Aorta (tissue), 5 donors: ENCODE measurements at regions of chr14 and their contacts with region 1.

Region 1: DNA sequence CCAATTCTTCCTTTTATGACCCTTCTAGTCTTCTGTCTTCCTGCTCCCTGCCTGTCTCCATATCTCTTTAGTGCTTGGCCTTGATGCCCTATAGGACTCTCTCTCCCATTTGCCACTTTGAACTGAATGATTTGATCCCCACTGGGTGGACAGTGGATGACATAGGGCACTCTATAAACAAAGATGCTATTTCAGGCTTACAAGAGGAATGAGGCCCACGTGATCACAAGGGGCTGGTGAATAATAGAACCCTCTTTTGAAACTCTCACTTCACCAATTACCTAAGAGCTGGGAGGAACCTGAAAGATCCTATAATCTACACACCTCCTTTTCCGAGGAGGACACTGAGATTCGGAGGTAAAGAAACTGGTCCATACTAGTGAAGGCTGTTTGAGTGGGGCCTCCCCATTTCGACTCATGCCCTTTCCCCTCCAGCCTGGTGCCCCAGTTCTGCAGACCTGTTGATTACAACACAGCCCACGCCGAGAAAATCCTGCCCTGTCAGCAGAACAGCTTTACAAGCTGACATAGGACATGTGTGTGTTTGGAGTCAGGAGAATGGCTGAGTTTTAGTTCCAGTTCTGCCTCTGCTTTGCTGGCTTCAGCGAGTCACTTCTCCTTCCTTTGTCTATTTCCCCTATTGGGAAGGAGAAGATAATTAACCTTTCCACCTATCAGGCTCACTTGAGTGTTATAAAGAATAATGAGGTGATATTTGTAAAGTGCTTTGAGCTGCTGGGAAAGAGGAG is 400.3 kb downstream of the ZFP36L1 start:
- DNase-seq: peak in 1 of 2 donors; percentile 87
- ATAC-seq: peak; percentile 37
- H3K4me3 ChIP-seq: no peak overlapping the region
- H3K27ac ChIP-seq: peak overlapping the region; percentile 85 to 94
- H3K4me1 ChIP-seq: peaks cover 7 to 10% of the 10 kb centered on the region in 2 donors
- H3K27me3 ChIP-seq: no peaks in the 10 kb centered on the region

Region 2: GRCh38 chr14:68248481-68249255 is 143.9 kb before region 1 on chr14:
- intact Hi-C with region 1: loop called in 1 of 2 experiments (anchors 5 kb)
- DNase-seq: peak; percentile 57 to 73
- ATAC-seq: peak; percentile 82
- H3K4me3 ChIP-seq: no peak overlapping the region
- H3K27ac ChIP-seq: peak overlapping the region in 1 of 2 donors; percentile 82
- H3K4me1 ChIP-seq: peaks cover 19 to 21% of the 10 kb centered on the region in 2 donors
- H3K27me3 ChIP-seq: no peaks in the 10 kb centered on the region

Region 3: DNA sequence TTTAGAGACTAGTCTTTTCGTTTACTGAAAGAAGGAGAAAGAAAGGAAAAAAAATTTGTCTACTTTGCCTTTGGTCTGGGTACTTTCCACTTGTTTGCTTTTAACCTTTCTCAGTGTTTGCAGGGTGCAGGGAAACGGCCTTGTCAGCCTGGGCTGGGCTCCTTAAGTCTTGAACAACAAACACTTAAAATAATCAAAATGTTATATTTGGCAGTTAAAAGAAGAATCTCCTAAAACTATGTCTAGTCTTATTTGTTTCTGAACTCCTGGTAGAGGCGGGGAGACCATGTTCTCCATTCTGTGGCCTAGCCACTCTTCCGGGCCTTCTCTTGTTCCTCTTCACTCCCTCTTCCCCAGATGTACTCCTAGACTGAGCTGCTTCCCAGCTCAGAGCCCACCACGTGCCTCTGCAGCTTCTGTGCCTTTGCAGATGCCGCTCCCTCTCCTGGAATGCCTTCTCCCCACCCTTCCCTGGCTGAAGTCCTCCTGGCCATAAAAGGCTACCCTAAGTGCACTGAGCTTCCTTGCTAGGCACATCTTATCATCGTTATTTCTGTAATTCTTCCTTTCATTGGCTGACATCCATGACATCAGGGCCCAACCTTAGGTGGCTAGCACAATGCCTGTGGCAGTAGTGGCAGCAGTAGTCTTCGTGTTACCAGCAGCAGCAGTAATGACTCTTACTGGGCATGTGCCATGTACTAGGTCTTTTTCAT is 32.6 kb before region 1 on chr14:
- intact Hi-C with region 1: loop called in 1 of 2 experiments (anchors 2 kb)
- DNase-seq: peak; percentile 82 to 83
- ATAC-seq: peak; percentile 75
- H3K4me3 ChIP-seq: no peak overlapping the region
- H3K27ac ChIP-seq: peak overlapping the region in 1 of 2 donors; percentile 59
- H3K4me1 ChIP-seq: peaks cover 2 to 3% of the 10 kb centered on the region in 2 donors
- H3K27me3 ChIP-seq: no peaks in the 10 kb centered on the region

Region 4: DNA sequence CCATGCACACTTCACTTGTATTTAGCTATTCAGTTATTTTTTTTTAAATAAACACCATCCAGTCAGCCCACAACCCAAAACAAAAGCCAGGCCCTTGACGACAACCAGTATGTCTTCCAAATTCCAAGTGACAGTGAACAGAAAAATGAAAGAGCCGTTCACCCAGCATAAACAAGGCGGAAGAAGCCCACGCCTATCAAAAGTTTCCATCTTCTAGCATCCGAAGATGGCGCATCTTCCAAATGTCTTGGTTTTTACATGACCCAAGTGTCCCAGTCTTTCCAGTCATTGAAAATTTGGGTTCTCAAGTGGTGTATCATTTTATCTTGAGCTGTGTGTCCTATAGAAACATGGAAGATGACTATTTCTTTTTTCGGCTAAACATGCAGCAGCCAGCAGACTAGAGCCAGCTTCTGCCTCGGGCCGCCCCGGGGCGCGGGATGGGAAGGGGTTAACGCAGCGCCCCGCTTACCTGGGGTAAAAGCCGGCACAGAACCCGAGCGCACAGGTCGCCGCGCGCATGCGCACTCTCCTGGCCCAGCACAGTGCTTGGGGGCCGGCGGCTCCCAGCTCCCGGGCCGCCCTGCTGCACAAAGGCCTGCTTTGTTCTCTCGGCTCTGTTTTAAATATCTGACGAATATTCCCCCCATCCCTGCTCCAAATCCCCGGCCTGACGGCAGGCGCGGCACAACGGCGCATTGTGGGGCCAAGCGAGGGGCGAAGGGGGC is 235.5 kb after region 1 on chr14:
- intact Hi-C with region 1: loop called in 1 of 2 experiments (anchors 10 kb)
- DNase-seq: peak; percentile 63 to 74
- ATAC-seq: no peak
- H3K4me3 ChIP-seq: no peak overlapping the region
- H3K27ac ChIP-seq: no peak overlapping the region
- H3K4me1 ChIP-seq: peaks cover 0 to 3% of the 10 kb centered on the region in 2 donors
- H3K27me3 ChIP-seq: no peaks in the 10 kb centered on the region

Region 5: DNA sequence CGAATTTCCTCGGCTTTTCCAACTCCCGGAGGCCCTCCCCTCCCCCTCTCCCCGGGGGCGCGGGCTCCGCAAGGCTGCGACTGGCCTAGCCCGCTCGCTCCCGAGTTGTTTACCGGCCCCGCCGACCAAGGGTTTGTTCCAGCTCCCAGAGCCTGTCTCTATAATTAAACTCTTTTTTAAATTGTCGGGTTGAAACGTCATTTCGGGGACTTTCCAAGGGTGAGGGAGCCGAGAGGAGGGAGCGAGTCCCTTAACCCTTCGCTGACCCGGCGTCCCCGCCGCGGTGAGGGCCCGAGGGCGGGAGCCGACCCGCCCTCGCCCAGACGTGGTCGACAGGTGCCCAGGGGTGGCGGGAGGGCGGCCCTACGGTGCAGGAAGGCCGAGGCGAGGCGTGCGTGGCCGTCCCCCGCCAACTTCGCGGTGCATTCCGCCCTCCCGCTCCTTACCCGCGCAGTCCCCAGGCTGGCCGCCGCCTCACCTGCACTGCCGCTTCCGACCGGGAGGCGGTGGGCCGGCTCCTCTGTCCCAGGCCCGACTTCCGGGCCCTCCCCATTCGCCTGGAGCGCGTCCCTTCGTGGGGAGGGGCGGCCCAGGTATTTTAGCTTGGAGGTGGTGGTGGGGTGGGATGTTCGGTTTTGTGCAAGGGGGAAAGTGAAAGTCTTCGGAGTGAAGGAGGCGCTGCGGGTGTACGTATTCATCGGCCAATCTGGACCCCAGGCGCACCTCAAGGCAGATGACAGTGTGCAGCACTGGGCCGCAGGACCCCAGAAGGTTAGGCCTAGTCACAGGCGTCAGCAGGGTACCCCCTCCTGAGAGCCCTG is 403.2 kb after region 1 on chr14:
- intact Hi-C with region 1: loop called in 1 of 2 experiments (anchors 5 kb)
- DNase-seq: peak; percentile 92 to 96
- ATAC-seq: peak; percentile 70
- H3K4me3 ChIP-seq: peak overlapping the region; percentile 82 to 95
- H3K27ac ChIP-seq: peak overlapping the region; percentile 100
- H3K4me1 ChIP-seq: no peaks in the 10 kb centered on the region
- H3K27me3 ChIP-seq: peaks cover 0 to 2% of the 10 kb centered on the region in 2 donors

Region 6: DNA sequence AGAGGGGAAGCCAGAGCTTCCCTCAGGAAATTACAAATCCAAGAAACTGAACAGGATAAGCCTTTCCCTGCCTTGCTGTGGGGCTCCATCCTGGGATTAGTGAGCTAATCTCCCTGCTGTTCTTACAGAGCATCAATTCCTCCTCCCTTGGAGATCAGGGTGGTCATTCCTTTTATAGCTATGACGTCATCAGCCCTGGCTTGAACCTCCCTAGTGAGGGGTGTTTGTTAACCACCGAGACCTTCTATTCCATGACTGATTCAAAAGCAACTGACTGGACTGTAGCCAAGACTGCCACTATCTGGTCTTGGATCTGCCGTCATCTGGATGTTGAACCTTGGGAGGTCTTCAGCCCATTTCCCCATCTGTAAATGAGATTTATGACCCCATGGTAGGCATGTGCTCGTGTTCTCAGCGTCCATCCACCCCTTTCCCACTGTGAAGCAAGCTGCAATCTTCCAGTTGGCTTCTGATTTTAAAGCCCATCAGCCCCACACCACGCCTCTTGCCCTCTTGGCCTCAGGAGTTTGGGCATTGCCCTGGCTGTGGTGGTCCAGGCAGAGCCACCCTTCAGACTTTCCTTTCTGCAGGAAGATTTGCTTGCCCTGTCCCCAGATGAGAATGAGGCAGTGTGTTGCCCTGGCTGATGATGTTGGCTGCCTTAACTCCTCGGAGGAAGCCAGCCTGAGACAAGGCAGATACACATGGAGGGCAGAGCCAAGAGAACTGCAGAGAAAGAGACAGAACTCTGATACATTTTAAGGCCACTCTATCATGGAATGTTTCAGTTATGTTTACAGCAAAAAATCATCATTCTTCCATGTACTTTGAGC is 646.1 kb after region 1 on chr14:
- intact Hi-C with region 1: no loop called
- DNase-seq: no peak
- ATAC-seq: peak; percentile 13
- H3K4me3 ChIP-seq: no peak overlapping the region
- H3K27ac ChIP-seq: peak overlapping the region; percentile 81 to 96
- H3K4me1 ChIP-seq: peaks cover 4 to 11% of the 10 kb centered on the region in 2 donors
- H3K27me3 ChIP-seq: no peaks in the 10 kb centered on the region